PC-3 (cell line): ENCODE measurements at regions of chr14 and their contacts with region 1.

Region 1: DNA sequence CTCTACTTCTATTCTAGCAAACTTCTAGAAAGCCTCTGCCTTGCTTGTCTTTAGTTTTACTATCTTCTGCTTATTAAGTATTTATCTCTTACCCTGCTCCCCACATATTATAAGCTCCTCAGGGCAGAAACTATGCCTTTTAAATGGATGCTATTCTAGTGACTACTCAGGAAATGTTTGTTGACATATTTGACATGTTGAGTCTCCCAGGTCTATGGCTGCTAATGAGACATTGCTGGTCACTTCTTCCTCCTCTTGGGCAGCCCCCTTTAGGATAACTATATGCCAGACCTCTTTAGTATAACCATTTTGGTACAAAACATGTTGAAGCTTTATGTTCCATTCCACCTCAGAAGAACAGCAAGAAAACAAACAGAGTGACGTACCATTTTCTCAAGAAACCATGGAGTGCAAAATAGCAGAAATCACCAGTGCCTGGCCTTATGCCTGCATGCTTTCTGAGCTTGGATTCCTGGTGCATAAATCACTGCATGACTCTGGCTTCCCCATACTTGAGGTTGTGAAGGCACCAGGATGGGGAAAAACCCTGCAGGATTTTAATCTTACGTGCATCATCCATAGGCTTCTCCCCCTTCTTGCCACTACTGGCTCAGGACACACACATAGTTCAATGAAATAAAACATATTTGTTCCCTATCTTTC is 202.6 kb downstream of the TMX1 start:
- DNase-seq: peak; percentile 97
- ATAC-seq: peak; percentile 91
- H3K4me3 ChIP-seq: peak overlapping the region; percentile 35
- H3K27ac ChIP-seq: peak overlapping the region; percentile 95
- H3K4me1 ChIP-seq: peaks cover 45% of the 10 kb centered on the region
- H3K27me3 ChIP-seq: no peaks in the 10 kb centered on the region
- CTCF ChIP-seq: no peak

Region 2: GRCh38 chr14:51298895-51299294 is 143.7 kb before region 1 on chr14:
- CTCF ChIA-PET with region 1: no interaction called
- POLR2A ChIA-PET with region 1: no interaction called
- intact Hi-C with region 1: loop called (anchors 5 kb)
- DNase-seq: peak; percentile 18
- ATAC-seq: peak; percentile 21; the same call in 1 of the 2 replicates
- H3K4me3 ChIP-seq: no peak overlapping the region
- H3K27ac ChIP-seq: no peak overlapping the region
- H3K4me1 ChIP-seq: peaks cover 26% of the 10 kb centered on the region
- H3K27me3 ChIP-seq: no peaks in the 10 kb centered on the region
- CTCF ChIP-seq: no peak

Region 3: GRCh38 chr14:51396222-51396815 is 46.3 kb before region 1 on chr14:
- CTCF ChIA-PET with region 1: interaction called, 5 read pairs
- POLR2A ChIA-PET with region 1: interaction called, 4 read pairs
- intact Hi-C with region 1: loop called (anchors 1 kb)
- DNase-seq: peak; percentile 99
- ATAC-seq: peak; percentile 48
- H3K4me3 ChIP-seq: peak overlapping the region; percentile 32; the same call in 1 of the 2 replicates
- H3K27ac ChIP-seq: peak overlapping the region; percentile 98
- H3K4me1 ChIP-seq: peaks cover 61% of the 10 kb centered on the region
- H3K27me3 ChIP-seq: no peaks in the 10 kb centered on the region
- CTCF ChIP-seq: no peak

Region 4: GRCh38 chr14:51490205-51490604 is 47.6 kb after region 1 on chr14:
- CTCF ChIA-PET with region 1: no interaction called
- POLR2A ChIA-PET with region 1: no interaction called
- intact Hi-C with region 1: loop called (anchors 2 kb)
- DNase-seq: peak; percentile 66
- ATAC-seq: peak; percentile 84
- H3K4me3 ChIP-seq: no peak overlapping the region
- H3K27ac ChIP-seq: peak overlapping the region; percentile 73
- H3K4me1 ChIP-seq: peaks cover 23% of the 10 kb centered on the region
- H3K27me3 ChIP-seq: no peaks in the 10 kb centered on the region
- CTCF ChIP-seq: no peak

Region 5: GRCh38 chr14:51521764-51522163 is 79.1 kb after region 1 on chr14:
- CTCF ChIA-PET with region 1: no interaction called
- POLR2A ChIA-PET with region 1: no interaction called
- intact Hi-C with region 1: no loop called
- DNase-seq: peak; percentile 60
- ATAC-seq: peak; percentile 63
- H3K4me3 ChIP-seq: no peak overlapping the region
- H3K27ac ChIP-seq: no peak overlapping the region
- H3K4me1 ChIP-seq: peaks cover 34% of the 10 kb centered on the region
- H3K27me3 ChIP-seq: no peaks in the 10 kb centered on the region
- CTCF ChIP-seq: no peak

Region 6: GRCh38 chr14:51533160-51533559 is 90.5 kb after region 1 on chr14:
- CTCF ChIA-PET with region 1: interaction called, 9 read pairs
- POLR2A ChIA-PET with region 1: no interaction called
- intact Hi-C with region 1: loop called (anchors 1 kb)
- DNase-seq: peak; percentile 99
- ATAC-seq: peak; percentile 80
- H3K4me3 ChIP-seq: no peak overlapping the region
- H3K27ac ChIP-seq: peak overlapping the region; percentile 96
- H3K4me1 ChIP-seq: peaks cover 31% of the 10 kb centered on the region
- H3K27me3 ChIP-seq: no peaks in the 10 kb centered on the region
- CTCF ChIP-seq: no peak

Region 7: GRCh38 chr14:51539571-51540037 is 97.0 kb after region 1 on chr14:
- CTCF ChIA-PET with region 1: no interaction called
- POLR2A ChIA-PET with region 1: interaction called, 6 read pairs
- intact Hi-C with region 1: loop called (anchors 1 kb)
- DNase-seq: peak; percentile 99
- ATAC-seq: peak; percentile 60
- H3K4me3 ChIP-seq: peak overlapping the region; percentile 22; the same call in 1 of the 2 replicates
- H3K27ac ChIP-seq: peak overlapping the region; percentile 96
- H3K4me1 ChIP-seq: peaks cover 50% of the 10 kb centered on the region
- H3K27me3 ChIP-seq: no peaks in the 10 kb centered on the region
- CTCF ChIP-seq: no peak

Region 8: GRCh38 chr14:51547260-51547659 is 104.6 kb after region 1 on chr14:
- CTCF ChIA-PET with region 1: no interaction called
- POLR2A ChIA-PET with region 1: no interaction called
- intact Hi-C with region 1: loop called (anchors 1 kb)
- DNase-seq: peak; percentile 99
- ATAC-seq: peak; percentile 93
- H3K4me3 ChIP-seq: peak overlapping the region; percentile 9; the same call in 1 of the 2 replicates
- H3K27ac ChIP-seq: peak overlapping the region; percentile 91
- H3K4me1 ChIP-seq: peaks cover 54% of the 10 kb centered on the region
- H3K27me3 ChIP-seq: no peaks in the 10 kb centered on the region
- CTCF ChIP-seq: no peak

Region 9: DNA sequence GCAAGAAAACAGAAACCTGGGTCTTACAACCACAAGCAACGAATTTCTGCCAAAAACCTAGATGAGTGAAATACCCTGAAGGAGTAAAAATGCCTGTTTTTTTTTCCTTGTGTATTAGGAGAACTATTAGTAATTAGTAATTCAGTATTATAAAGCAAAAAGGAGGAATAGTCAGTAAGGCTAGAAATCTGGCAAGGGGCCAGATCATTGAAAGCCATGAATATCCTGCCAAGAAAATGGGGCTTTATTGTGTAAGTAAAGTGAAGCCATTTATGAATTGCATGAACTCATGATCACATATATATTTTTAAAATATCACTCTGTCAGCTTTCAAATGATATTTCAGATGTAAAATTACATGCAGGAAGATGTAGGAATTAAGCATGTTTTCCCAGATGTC is 1051.8 kb after region 1 on chr14:
- CTCF ChIA-PET with region 1: no interaction called
- POLR2A ChIA-PET with region 1: no interaction called
- intact Hi-C with region 1: no loop called
- DNase-seq: no peak
- ATAC-seq: no peak
- H3K4me3 ChIP-seq: no peak overlapping the region
- H3K27ac ChIP-seq: no peak overlapping the region
- H3K4me1 ChIP-seq: no peaks in the 10 kb centered on the region
- H3K27me3 ChIP-seq: no peaks in the 10 kb centered on the region
- CTCF ChIP-seq: no peak